BJ (cell line): ENCODE measurements at regions of chr3 and their contacts with region 1.

Region 1: GRCh38 chr3:64462203-64462602 is 225.6 kb downstream of the ADAMTS9 start:
- DNase-seq: peak; percentile 62
- H3K4me3 ChIP-seq: peak overlapping the region; percentile 6; the same call in 1 of the 2 replicates
- H3K27me3 ChIP-seq: peaks cover 9% of the 10 kb centered on the region
- CTCF ChIP-seq: no peak

Region 2: DNA sequence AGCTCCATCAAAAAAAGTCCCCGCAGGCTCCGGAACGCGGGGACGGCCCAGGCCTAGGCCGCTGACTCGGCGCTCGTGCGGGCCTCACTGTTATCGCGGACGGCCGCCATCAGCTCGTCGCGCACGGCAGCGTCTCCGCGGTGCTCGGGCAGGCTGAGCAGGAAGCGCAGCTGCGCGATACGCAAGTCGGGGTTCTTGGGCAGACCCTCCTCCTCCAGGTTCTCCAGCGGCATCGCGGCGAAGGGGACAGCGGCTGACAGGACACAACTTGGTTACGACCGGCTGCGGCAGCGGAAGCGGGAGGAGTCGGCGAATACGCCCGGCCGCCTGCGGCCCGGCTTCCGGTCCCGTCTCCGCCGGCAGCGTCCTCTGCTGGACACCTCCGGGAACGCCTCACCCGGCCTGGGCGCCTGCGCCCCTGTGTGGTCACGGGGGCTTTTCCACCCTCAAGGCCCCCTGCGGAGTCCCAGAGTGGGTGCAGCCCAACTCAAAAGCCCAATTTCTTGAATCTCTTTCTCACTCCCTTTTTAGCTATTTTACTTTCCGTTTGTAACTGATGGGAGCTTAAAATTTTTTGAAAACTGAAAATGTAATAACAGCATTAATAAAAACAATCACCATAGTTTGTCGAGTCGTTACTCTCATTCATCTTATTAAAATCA is 438.9 kb before region 1 on chr3 and contains the start of gene PSMD6:
- CTCF ChIA-PET with region 1: interaction called, 14 read pairs
- POLR2A ChIA-PET with region 1: no interaction called
- DNase-seq: no peak
- H3K4me3 ChIP-seq: peak within 1 kb of the TSS; percentile 94
- H3K27me3 ChIP-seq: peaks cover 3% of the 10 kb centered on the region; the same call in 1 of the 2 replicates
- CTCF ChIP-seq: peak; percentile 100
- polyA plus RNA-seq, gene PSMD6: 47.8 and 54.5 TPM in 2 replicates

Region 3: GRCh38 chr3:64030741-64031140 is 431.5 kb before region 1 on chr3:
- CTCF ChIA-PET with region 1: interaction called, 17 read pairs
- POLR2A ChIA-PET with region 1: no interaction called
- DNase-seq: no peak
- H3K4me3 ChIP-seq: no peak overlapping the region
- H3K27me3 ChIP-seq: peaks cover 6% of the 10 kb centered on the region
- CTCF ChIP-seq: peak; percentile 84

Region 4: DNA sequence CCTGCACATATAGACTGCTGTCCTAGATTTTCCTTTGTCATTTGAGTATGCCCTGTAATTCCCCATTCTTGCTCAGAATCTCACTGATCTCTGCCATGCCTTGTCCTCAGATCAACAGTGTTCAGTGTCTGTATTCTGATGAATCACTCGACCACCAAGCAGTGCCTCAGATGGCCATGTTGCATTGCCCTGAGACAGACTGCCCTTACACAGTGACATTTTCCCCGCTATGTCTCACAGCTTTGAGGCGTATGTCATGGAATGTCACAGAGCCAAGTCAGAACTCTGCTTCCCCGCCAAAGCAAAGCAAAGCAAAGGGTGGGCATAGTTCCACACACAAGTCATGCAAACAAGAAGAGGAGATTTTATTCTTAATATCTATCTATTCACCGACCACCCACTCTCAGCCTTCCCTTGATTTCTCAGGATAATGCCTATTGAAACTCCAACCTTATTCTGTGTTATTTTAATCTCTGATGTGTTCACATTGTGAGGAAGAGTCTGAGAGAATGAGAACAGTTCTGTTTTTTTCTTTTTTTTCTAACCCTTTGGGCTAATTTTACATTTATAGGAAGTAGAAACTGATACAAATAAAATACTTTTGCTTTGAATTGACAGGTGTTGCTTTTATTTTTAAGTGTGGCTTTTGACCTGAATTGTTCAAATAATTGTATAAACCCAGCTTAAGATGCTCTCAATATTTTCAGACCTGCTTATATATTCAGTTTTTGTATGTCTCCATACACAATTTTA is 422.0 kb before region 1 on chr3:
- CTCF ChIA-PET with region 1: interaction called, 12 read pairs
- POLR2A ChIA-PET with region 1: no interaction called
- DNase-seq: no peak
- H3K4me3 ChIP-seq: no peak overlapping the region
- H3K27me3 ChIP-seq: no peaks in the 10 kb centered on the region
- CTCF ChIP-seq: no peak

Region 5: DNA sequence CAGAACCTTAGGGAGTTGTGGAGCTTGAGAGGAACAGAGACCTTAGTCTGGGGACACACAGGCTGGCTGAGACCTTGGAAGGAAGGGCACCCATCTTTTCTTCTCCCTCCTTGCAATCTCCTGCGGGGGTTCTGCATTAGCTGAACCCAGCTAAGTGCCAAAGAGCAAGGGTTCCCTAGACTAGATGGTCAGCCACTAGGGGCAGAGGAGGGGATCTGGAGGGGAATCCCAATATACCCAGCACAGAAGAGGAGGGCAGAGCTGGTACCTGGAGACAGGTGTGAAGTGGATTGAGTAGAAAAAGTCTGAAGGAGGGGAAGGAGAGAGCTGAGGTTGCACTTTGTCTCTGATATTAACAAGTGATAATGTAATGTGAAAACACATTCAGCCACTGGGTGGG is 12.8 kb after region 1 on chr3:
- CTCF ChIA-PET with region 1: interaction called, 18 read pairs
- POLR2A ChIA-PET with region 1: no interaction called
- DNase-seq: no peak
- H3K4me3 ChIP-seq: no peak overlapping the region
- H3K27me3 ChIP-seq: peaks cover 5% of the 10 kb centered on the region
- CTCF ChIP-seq: no peak

Region 6: DNA sequence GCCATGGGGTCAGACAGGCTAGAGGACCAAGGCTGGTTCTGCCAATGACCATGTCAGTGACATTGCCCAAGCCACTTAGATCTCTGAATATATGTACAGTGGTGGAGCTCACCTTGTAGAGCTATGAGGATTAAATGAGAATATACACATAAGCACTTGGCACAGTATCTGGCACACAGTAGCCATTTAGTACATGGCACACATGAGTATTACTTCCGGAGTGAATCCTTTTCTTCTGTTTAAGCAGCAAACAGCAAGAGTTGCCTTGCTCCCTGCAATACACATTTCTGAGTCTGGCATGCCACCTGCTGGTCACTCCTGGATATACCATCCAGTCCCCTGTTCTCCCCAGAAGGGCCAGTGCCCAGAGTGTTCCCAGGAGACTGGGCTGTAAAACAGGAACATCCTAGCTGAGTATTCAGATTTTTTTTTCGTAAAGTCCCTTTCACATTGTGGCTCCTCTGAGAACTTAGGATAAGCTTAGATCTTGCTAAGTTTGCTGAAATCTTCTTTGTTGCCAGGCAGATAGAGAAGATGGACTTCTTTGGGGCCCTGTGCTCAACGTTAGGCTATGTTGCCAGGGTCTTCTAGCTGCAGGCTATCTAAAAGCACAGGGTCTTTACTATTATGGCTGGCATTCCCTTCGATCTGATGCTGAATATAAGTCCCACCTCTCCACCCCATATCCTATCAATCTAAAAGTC is 22.2 kb after region 1 on chr3:
- CTCF ChIA-PET with region 1: interaction called, 20 read pairs
- POLR2A ChIA-PET with region 1: no interaction called
- DNase-seq: peak; percentile 13
- H3K4me3 ChIP-seq: no peak overlapping the region
- H3K27me3 ChIP-seq: peaks cover 2% of the 10 kb centered on the region
- CTCF ChIP-seq: peak; percentile 80